Activated CD4-positive, alpha-beta T cell treated with anti-CD3 and anti-CD28 coated beads, Interleukin-2, amount 10 ng/mL, durations not matched to agents 24 days and 14 days (primary cell): ENCODE measurements at regions of chr3 and their contacts with region 1.

Region 1: GRCh38 chr3:61251174-61251972 is at the start of gene FHIT:
- DNase-seq: peak; percentile 98
- H3K4me3 Mint-ChIP-seq: peak within 1 kb of the TSS; percentile 87
- H3K27ac Mint-ChIP-seq: peak within 1 kb of the TSS; percentile 89
- H3K4me1 Mint-ChIP-seq: peaks cover 19% of the 10 kb centered on the region
- H3K27me3 Mint-ChIP-seq: peaks cover 2% of the 10 kb centered on the region
- total RNA-seq, gene FHIT: 23.8 and 27.7 TPM in 2 replicates

Region 2: GRCh38 chr3:60010781-60011180 is 1240.6 kb before region 1 on chr3:
- intact Hi-C with region 1: loop called (anchors 2 kb)
- DNase-seq: peak; percentile 92
- H3K4me3 Mint-ChIP-seq: peak overlapping the region; percentile 80
- H3K27ac Mint-ChIP-seq: peak overlapping the region; percentile 93
- H3K4me1 Mint-ChIP-seq: peaks cover 66% of the 10 kb centered on the region
- H3K27me3 Mint-ChIP-seq: no peaks in the 10 kb centered on the region

Region 3: DNA sequence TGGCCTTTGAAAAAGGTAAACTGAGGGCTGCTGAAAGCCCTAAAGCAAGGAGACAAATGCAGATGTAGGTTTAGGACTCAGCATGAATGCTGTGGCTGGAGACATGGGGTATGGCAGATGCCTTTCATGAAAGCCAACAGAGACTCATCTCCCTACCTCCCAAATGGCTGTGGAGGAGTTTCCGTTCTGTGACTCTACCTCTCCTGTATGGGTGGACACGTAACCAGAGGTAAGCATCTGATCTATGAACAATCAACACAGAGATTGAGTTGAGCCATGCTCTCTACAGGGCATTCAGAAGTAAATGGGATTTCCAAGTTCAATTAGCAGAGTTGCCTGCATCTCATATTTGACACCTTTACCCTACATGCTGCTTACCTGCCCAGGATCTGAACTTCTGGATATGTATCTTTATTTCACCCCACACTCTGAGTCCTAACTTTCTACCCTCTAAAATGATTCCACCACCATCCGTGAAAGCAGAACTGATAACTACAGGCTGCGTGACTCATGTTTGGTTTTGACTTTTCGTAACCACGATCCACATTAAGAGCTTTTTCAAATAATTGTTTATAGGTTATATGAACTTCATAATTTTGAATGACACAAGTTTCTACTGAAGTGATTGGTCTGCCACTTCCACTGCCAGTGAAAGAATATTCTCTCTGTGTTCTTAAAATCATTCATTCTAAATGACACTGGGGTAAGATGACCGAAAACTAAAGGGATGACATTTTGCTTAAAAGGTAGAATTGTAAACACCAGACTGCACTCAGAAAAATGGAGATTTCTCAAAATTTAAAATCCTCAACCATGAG is 1058.9 kb before region 1 on chr3:
- intact Hi-C with region 1: loop called (anchors 1 kb)
- DNase-seq: peak; percentile 70
- H3K4me3 Mint-ChIP-seq: peak overlapping the region; percentile 45
- H3K27ac Mint-ChIP-seq: peak overlapping the region; percentile 90
- H3K4me1 Mint-ChIP-seq: peaks cover 48% of the 10 kb centered on the region
- H3K27me3 Mint-ChIP-seq: no peaks in the 10 kb centered on the region

Region 4: DNA sequence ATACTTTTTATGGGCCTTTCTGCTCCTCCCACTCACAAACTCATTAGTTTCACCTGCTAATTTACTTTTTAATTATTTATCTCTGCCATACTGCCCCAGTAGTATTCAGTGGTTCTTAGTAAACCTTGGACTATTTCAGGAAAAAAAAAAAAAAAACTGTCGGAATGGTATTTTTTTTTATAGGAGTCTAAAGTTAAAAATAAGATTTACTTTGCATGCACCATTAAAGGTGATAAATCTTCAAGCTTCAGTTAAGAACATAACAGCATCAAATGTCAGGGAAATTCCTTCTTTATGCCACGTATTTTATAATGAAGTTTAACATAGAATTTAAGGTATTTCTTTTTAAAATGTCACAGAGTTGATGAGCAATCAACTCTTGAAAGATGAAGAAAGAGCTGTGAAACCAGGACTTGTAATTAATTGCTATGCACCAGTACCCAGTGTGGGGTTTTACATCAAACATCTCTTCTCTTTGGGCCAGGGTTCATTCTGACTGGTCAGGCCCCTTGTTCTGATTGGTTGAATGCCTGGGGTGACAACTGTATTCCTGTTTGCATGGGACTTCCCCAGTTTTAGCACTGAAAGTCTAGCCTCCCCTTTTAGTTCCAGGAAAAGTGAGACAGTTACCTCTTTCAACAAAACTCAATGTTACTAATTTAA is 269.7 kb after region 1 on chr3:
- intact Hi-C with region 1: loop called (anchors 5 kb)
- DNase-seq: peak; percentile 84
- H3K4me3 Mint-ChIP-seq: peak overlapping the region; percentile 48
- H3K27ac Mint-ChIP-seq: peak overlapping the region; percentile 80
- H3K4me1 Mint-ChIP-seq: peaks cover 37% of the 10 kb centered on the region
- H3K27me3 Mint-ChIP-seq: no peaks in the 10 kb centered on the region

Region 5: DNA sequence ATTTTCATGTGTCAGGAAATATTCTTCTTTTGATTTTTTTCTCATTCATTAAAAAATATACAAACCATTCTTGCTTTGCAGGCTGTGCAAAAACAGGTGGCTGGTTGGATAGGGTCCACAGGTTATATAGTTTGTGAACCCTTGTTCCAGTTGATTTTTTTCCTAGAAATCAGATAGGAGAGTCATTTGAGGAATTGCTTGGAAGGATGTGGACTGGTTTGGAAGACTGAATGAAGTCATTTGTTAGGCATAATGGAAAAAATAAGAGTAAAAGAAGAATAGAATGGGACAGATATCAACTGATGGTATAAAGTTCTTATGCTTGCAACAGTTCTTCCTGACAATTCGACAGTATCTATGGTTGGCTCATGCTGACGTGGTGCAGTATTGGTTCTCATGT is 499.4 kb after region 1 on chr3:
- intact Hi-C with region 1: no loop called
- DNase-seq: no peak
- H3K4me3 Mint-ChIP-seq: no peak overlapping the region
- H3K27ac Mint-ChIP-seq: no peak overlapping the region
- H3K4me1 Mint-ChIP-seq: no peaks in the 10 kb centered on the region
- H3K27me3 Mint-ChIP-seq: no peaks in the 10 kb centered on the region

Region 6: DNA sequence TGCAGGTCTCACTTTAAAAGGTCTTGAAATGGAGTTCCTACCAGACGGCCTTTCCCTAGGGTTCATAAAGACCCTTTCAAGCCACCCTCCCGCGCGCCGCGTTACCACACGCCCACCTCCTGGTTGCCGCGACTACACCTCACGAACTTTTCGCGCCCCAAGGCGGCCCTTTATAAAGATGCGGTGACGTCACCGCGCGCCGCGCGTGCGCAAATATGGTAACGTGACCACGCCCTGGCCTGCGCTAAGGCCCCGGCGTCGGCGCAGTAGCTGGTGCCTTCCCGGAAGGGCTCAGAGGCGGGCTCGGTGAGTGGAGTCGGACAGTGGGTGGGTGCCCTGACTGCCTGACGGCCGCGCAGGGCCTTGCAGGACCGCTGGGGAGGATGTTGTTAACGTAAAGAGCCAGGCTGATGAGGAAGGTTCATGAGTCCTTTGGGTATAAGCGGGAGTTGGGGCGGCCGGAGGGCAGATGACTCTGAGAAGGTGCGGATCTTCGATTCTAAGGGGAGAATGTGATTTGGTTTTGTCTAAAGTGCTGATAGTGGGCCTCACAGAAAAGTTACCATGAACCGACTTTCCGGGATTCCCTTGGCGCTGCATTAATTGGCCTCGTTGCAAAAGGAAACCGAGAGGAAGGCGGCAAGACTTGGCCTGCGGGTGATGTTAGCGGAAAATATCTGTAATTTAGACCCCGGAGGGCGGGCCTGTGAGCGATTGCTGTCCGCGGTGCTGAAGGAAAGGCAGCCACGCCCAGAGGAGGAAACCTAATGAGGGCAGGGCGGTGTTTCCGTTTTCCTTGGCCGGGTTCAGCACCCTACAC is 1067.6 kb after region 1 on chr3:
- intact Hi-C with region 1: loop called (anchors 2 kb)
- DNase-seq: peak; percentile 85
- H3K4me3 Mint-ChIP-seq: peak overlapping the region; percentile 97
- H3K27ac Mint-ChIP-seq: peak overlapping the region; percentile 99
- H3K4me1 Mint-ChIP-seq: peaks cover 6% of the 10 kb centered on the region
- H3K27me3 Mint-ChIP-seq: peaks cover 11% of the 10 kb centered on the region